ENCODE measurements at regions of chr16 and their contacts with region 1.

Region 1: GRCh38 chr16:31458844-31459721 is at the start of gene ARMC5:
- DNase-seq: peak; percentile 95 to 97
- H3K4me3 ChIP-seq: peak within 1 kb of the TSS; percentile 78
- H3K4me3 Mint-ChIP-seq: peak within 1 kb of the TSS; percentile 79
- H3K27ac Mint-ChIP-seq: peak within 1 kb of the TSS; percentile 85
- H3K4me1 ChIP-seq: peaks cover 13% of the 10 kb centered on the region; the same call in 1 of the 2 replicates
- H3K4me1 Mint-ChIP-seq: peaks cover 6% of the 10 kb centered on the region
- H3K27me3 ChIP-seq: no peaks in the 10 kb centered on the region
- H3K27me3 Mint-ChIP-seq: no peaks in the 10 kb centered on the region
- CTCF ChIP-seq: peak; percentile 63 to 79
- total RNA-seq, gene ARMC5: 9.7 and 10.2 TPM in 2 replicates

Region 2: DNA sequence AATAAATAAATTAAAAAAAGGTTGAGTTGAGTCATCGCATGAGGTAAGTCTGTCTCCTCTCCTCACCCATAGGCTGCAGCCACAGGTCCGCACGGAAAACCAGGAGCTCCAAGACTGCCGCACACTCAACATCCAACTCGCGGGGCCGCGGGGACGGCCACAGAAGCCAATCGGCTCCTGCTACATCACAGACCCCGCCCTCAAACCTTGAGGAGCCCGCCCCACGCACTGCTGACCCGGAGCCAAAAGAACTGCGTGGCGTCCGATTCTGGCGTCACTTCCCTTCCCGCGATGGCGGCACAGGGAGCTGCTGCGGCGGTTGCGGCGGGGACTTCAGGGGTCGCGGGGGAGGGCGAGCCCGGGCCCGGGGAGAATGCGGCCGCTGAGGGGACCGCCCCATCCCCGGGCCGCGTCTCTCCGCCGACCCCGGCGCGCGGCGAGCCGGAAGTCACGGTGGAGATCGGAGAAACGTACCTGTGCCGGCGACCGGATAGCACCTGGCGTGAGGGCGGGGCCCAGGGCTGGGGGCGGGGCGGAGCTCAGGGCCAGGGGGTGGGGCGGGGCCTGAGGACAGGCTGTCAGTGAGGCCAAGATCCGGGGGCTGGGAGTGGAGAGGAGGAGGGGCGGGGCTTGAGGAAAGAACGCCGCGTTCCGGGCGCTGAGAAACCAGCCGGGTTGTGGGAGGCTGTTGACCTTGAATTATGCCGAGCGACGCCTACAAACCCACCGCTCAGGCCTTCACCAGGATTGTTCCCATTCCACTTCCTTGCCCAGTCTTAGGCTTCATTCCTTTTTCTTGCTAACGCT is 341.5 kb before region 1 on chr16 and contains the start of gene KAT8:
- CTCF ChIA-PET with region 1: no interaction called
- POLR2A ChIA-PET with region 1: interaction called, 12 read pairs
- intact Hi-C with region 1: no loop called
- DNase-seq: peak; percentile 97
- H3K4me3 ChIP-seq: peak within 1 kb of the TSS; percentile 55
- H3K4me3 Mint-ChIP-seq: peak within 1 kb of the TSS; percentile 88
- H3K27ac Mint-ChIP-seq: peak within 1 kb of the TSS; percentile 88
- H3K4me1 ChIP-seq: peaks cover 16% of the 10 kb centered on the region
- H3K4me1 Mint-ChIP-seq: peaks cover 16% of the 10 kb centered on the region
- H3K27me3 ChIP-seq: no peaks in the 10 kb centered on the region
- H3K27me3 Mint-ChIP-seq: no peaks in the 10 kb centered on the region
- CTCF ChIP-seq: no peak
- total RNA-seq, gene KAT8: 46.2 and 50.2 TPM in 2 replicates

Region 3: GRCh38 chr16:31148281-31148771 is 310.8 kb before region 1 on chr16:
- CTCF ChIA-PET with region 1: no interaction called
- POLR2A ChIA-PET with region 1: no interaction called
- intact Hi-C with region 1: no loop called
- DNase-seq: no peak
- H3K4me3 ChIP-seq: no peak overlapping the region
- H3K4me3 Mint-ChIP-seq: no peak overlapping the region
- H3K27ac Mint-ChIP-seq: no peak overlapping the region
- H3K4me1 ChIP-seq: peaks cover under 1% of the 10 kb centered on the region; the same call in 1 of the 2 replicates
- H3K4me1 Mint-ChIP-seq: no peaks in the 10 kb centered on the region
- H3K27me3 ChIP-seq: no peaks in the 10 kb centered on the region
- H3K27me3 Mint-ChIP-seq: no peaks in the 10 kb centered on the region
- CTCF ChIP-seq: no peak

Region 4: GRCh38 chr16:31440516-31441184 is 18.4 kb before region 1 on chr16:
- CTCF ChIA-PET with region 1: interaction called, 12 read pairs
- POLR2A ChIA-PET with region 1: interaction called, 5 read pairs
- intact Hi-C with region 1: no loop called
- DNase-seq: no peak
- H3K4me3 ChIP-seq: no peak overlapping the region
- H3K4me3 Mint-ChIP-seq: no peak overlapping the region
- H3K27ac Mint-ChIP-seq: no peak overlapping the region
- H3K4me1 ChIP-seq: no peaks in the 10 kb centered on the region
- H3K4me1 Mint-ChIP-seq: no peaks in the 10 kb centered on the region
- H3K27me3 ChIP-seq: no peaks in the 10 kb centered on the region
- H3K27me3 Mint-ChIP-seq: no peaks in the 10 kb centered on the region
- CTCF ChIP-seq: no peak

Region 5: DNA sequence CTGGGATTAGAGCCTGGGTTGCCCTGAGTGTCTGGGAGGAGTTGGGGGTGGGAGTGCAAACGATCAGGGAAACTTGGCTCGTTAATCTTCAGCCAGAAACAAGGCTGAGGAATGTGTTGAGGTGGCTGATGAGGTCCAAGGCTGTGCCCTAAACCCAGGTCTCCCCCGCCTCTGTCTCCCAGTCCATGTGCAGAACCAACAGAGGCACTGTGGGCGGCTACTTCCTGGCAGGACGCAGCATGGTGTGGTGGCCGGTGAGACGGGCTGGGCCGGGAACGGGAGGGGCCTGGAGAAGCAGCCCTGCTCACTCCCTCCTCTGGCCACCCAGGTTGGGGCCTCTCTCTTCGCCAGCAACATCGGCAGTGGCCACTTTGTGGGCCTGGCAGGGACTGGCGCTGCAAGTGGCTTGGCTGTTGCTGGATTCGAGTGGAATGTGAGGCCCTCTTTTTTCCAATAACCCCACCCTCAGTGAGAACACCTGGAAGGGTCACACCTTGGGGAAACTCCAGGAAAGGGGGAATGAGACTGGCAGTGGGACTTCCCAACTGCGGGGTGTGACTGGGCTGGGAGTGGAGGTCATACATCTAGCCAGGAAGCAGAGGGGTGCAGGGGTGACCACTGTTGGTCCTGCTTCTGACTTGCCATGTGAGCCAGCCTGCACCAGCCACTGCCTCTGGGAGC is 25.5 kb after region 1 on chr16:
- CTCF ChIA-PET with region 1: interaction called, 3 read pairs
- POLR2A ChIA-PET with region 1: no interaction called
- intact Hi-C with region 1: loop called (anchors 1 kb)
- DNase-seq: peak; percentile 87 to 93
- H3K4me3 ChIP-seq: peak overlapping the region; percentile 21
- H3K4me3 Mint-ChIP-seq: peak overlapping the region; percentile 67
- H3K27ac Mint-ChIP-seq: peak overlapping the region; percentile 89
- H3K4me1 ChIP-seq: peaks cover 18% of the 10 kb centered on the region
- H3K4me1 Mint-ChIP-seq: no peaks in the 10 kb centered on the region
- H3K27me3 ChIP-seq: no peaks in the 10 kb centered on the region
- H3K27me3 Mint-ChIP-seq: no peaks in the 10 kb centered on the region
- CTCF ChIP-seq: peak in 1 of 2 experiments; percentile 8

Region 6: DNA sequence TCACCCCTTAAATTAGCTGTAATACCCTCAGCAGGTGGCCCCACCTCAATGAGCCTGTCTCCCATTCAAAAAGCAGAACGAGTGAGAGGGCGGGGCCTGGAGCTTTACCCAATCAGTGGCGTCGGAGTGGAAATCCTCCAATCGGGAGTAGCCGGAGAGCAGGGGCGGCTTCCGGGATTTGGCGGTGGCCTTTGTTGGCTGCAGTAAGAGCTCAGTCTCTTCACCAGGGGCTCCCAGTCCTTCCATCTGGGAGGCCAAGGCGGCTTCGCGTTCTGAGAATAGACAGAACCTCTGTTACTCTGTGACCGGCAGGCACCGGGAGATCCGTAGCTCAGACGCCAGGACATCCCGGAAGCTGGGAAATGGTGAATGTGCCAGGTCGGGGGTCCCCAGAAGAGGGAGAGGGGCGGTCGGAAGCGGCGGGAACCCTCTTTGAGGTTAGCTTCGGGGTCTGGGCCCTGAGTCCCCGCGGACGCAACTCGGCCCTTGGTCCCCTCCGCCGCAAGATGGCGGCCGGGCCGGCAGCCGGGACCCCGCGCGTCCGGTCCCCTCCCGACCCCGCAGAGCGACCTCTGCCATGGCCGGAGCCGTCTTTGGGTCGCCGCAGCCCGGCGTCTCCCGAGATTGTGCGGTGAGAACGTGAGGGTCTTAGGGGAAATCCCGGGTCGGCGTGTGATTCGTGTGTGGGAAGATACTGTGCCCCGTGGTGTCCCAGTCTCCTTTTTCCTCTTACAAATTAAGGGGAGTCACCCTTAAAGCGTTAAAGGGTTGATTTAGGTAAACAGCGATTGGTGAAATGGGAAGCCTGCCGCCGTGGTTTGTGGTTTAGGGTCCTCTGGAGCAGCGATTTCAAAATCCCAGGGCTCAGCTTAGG is 254.2 kb after region 1 on chr16:
- CTCF ChIA-PET with region 1: interaction called, 3 read pairs
- POLR2A ChIA-PET with region 1: interaction called, 13 read pairs
- intact Hi-C with region 1: no loop called
- DNase-seq: peak; percentile 93 to 94
- H3K4me3 ChIP-seq: peak overlapping the region; percentile 77
- H3K4me3 Mint-ChIP-seq: peak overlapping the region; percentile 99
- H3K27ac Mint-ChIP-seq: peak overlapping the region; percentile 100
- H3K4me1 ChIP-seq: no peaks in the 10 kb centered on the region
- H3K4me1 Mint-ChIP-seq: peaks cover 12% of the 10 kb centered on the region
- H3K27me3 ChIP-seq: no peaks in the 10 kb centered on the region
- H3K27me3 Mint-ChIP-seq: no peaks in the 10 kb centered on the region
- CTCF ChIP-seq: no peak

Measured in Caco-2 (cell line).